ENCODE measurements at regions of chr11 and their contacts with region 1.

Region 1: GRCh38 chr11:111841370-111842053 is 29.9 kb downstream of the ALG9 start:
- DNase-seq: peak; percentile 91 to 94
- H3K4me3 ChIP-seq: no peak overlapping the region
- H3K4me3 Mint-ChIP-seq: no peak overlapping the region
- H3K27ac Mint-ChIP-seq: no peak overlapping the region
- H3K4me1 ChIP-seq: peaks cover 19% of the 10 kb centered on the region
- H3K4me1 Mint-ChIP-seq: peaks cover 20% of the 10 kb centered on the region
- H3K27me3 ChIP-seq: no peaks in the 10 kb centered on the region
- H3K27me3 Mint-ChIP-seq: no peaks in the 10 kb centered on the region
- CTCF ChIP-seq: peak; percentile 96 to 98

Region 2: DNA sequence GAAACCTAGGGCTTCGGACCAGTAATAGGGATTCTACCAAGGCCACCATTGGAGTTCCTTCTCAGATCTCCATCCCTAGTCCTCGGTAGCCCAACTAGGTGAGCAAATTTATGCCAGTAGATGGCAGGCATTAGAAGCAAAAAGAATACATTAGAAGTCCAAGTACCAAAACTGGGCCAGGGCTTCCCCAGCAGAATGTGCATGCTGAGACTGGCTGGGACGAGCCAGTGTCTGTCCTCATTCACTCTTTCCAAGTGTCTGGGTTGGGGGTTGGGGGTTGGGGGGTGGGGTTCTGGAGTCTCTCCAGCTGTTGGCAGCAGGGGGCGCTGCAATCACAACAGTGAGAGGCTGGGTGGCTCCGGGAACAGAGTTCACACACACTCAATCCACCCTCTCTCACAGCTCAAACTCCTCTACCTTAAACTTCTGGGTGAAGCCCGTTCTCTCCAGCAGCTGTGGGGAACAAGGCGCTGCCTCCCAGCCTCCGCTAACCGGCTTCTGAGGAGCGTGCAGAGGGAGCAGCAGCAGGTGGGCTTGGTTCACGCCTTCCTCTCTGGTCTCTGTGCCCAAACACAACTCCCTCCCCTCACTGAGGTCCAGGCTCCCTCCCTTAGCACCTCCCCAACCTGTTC is 386.8 kb before region 1 on chr11:
- CTCF ChIA-PET with region 1: interaction called, 3 read pairs
- POLR2A ChIA-PET with region 1: no interaction called
- intact Hi-C with region 1: loop called (anchors 1 kb)
- DNase-seq: peak; percentile 76 to 78
- H3K4me3 ChIP-seq: no peak overlapping the region
- H3K4me3 Mint-ChIP-seq: no peak overlapping the region
- H3K27ac Mint-ChIP-seq: no peak overlapping the region
- H3K4me1 ChIP-seq: peaks cover 12% of the 10 kb centered on the region
- H3K4me1 Mint-ChIP-seq: peaks cover 12% of the 10 kb centered on the region
- H3K27me3 ChIP-seq: no peaks in the 10 kb centered on the region
- H3K27me3 Mint-ChIP-seq: peaks cover 3% of the 10 kb centered on the region
- CTCF ChIP-seq: peak; percentile 64 to 83

Region 3: DNA sequence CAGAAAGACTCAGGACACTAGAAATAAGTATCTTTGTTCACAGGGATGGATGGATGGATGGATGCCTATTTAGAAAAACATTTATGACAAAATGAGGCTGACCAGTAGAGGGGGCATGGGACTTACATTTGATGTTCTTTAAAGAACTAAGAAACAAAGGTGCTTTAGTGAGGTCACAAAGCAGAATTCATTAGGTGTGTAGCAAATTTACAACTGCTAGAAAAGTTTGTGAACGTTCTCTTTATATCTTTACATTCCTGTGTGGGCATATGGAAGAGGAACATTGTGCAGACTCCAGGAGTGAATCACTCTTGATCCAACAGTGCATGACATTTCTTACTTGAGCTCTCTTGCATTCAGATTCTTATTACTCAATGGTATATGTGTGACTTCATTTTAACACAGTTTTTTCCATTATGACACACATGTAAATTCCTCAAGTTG is 255.1 kb before region 1 on chr11:
- CTCF ChIA-PET with region 1: interaction called, 6 read pairs
- POLR2A ChIA-PET with region 1: no interaction called
- intact Hi-C with region 1: loop called (anchors 1 kb)
- DNase-seq: peak in 1 of 2 experiments; percentile 71
- H3K4me3 ChIP-seq: no peak overlapping the region
- H3K4me3 Mint-ChIP-seq: no peak overlapping the region
- H3K27ac Mint-ChIP-seq: no peak overlapping the region
- H3K4me1 ChIP-seq: no peaks in the 10 kb centered on the region
- H3K4me1 Mint-ChIP-seq: no peaks in the 10 kb centered on the region
- H3K27me3 ChIP-seq: no peaks in the 10 kb centered on the region
- H3K27me3 Mint-ChIP-seq: no peaks in the 10 kb centered on the region
- CTCF ChIP-seq: peak; percentile 83 to 91

Region 4: DNA sequence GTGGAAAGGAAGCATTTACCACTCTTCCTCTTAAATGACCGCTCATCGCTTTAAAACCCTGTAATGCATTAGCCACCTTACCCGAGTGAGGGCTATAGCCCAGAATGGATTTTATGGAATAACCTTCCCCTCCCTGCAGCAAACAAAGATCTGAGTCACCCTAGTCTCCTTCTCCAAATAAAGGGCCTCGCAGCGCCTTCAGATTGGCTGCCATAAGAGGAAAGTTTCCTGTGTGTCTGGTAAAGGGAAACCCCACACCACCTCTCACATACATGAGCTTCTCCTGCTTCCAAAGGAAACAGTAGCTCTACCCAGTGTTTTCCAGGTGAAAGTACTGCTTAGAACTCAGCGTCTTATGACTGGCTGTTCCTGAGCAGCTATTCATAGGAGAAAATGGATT is 123.1 kb before region 1 on chr11:
- CTCF ChIA-PET with region 1: interaction called, 3 read pairs
- POLR2A ChIA-PET with region 1: no interaction called
- intact Hi-C with region 1: loop called (anchors 5 kb)
- DNase-seq: peak in 1 of 2 experiments; percentile 41
- H3K4me3 ChIP-seq: no peak overlapping the region
- H3K4me3 Mint-ChIP-seq: no peak overlapping the region
- H3K27ac Mint-ChIP-seq: peak overlapping the region; percentile 14
- H3K4me1 ChIP-seq: peaks cover 5% of the 10 kb centered on the region; the same call in 1 of the 2 replicates
- H3K4me1 Mint-ChIP-seq: peaks cover 15% of the 10 kb centered on the region
- H3K27me3 ChIP-seq: no peaks in the 10 kb centered on the region
- H3K27me3 Mint-ChIP-seq: no peaks in the 10 kb centered on the region
- CTCF ChIP-seq: no peak

Region 5: GRCh38 chr11:111737444-111738210 is 103.9 kb before region 1 on chr11:
- CTCF ChIA-PET with region 1: no interaction called
- POLR2A ChIA-PET with region 1: no interaction called
- intact Hi-C with region 1: loop called (anchors 1 kb)
- DNase-seq: no peak
- H3K4me3 ChIP-seq: no peak overlapping the region
- H3K4me3 Mint-ChIP-seq: no peak overlapping the region
- H3K27ac Mint-ChIP-seq: peak overlapping the region; percentile 29
- H3K4me1 ChIP-seq: peaks cover 13% of the 10 kb centered on the region
- H3K4me1 Mint-ChIP-seq: peaks cover 13% of the 10 kb centered on the region
- H3K27me3 ChIP-seq: no peaks in the 10 kb centered on the region
- H3K27me3 Mint-ChIP-seq: no peaks in the 10 kb centered on the region
- CTCF ChIP-seq: no peak

Region 6: DNA sequence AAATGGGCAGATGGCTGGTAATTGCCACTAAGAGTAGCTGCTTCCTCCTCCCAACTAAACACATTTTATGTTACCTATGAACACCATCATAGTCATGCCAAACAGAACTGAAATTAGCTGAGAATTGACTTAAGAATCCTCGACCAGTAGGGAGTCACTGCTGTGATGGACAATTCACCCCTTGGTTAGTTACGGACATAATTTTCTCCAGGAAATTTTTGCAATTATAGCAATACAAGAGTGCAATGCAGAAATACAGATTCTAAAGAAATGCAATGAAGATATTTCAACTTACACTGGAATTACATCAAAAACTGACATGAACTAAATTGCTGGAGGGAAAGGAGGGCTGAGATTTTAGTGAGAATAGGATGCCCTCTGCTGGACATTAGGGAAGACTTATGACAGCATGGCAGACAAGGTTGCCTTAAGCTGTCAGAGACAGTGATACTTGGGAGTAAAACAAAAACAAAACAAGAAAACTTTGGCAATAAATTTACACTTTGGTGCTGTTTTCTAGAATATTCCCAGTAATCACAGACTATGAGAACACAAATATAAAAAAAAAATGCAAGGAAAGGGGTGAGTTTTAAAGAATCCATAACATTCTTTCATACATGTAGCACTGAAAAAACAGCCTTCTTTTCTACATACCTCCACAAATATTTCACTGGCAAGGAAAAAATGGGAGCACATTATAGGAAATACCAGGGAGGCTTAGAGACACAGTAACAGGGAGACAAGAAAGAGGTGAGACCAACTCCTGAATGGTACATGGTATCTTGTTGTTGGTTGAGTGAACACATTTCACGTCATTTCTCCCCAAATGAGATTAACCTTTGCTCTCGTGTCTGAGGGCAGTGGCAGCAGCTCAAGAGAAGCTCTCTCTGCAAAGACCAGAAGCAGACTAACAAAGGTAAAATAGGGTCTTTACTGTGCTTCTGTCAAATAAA is 64.1 kb before region 1 on chr11:
- CTCF ChIA-PET with region 1: interaction called, 16 read pairs
- POLR2A ChIA-PET with region 1: no interaction called
- intact Hi-C with region 1: loop called (anchors 1 kb)
- DNase-seq: peak; percentile 54 to 71
- H3K4me3 ChIP-seq: no peak overlapping the region
- H3K4me3 Mint-ChIP-seq: peak overlapping the region; percentile 4
- H3K27ac Mint-ChIP-seq: peak overlapping the region; percentile 39
- H3K4me1 ChIP-seq: peaks cover 17% of the 10 kb centered on the region
- H3K4me1 Mint-ChIP-seq: peaks cover 17% of the 10 kb centered on the region
- H3K27me3 ChIP-seq: no peaks in the 10 kb centered on the region
- H3K27me3 Mint-ChIP-seq: no peaks in the 10 kb centered on the region
- CTCF ChIP-seq: peak; percentile 95 to 96

Region 7: DNA sequence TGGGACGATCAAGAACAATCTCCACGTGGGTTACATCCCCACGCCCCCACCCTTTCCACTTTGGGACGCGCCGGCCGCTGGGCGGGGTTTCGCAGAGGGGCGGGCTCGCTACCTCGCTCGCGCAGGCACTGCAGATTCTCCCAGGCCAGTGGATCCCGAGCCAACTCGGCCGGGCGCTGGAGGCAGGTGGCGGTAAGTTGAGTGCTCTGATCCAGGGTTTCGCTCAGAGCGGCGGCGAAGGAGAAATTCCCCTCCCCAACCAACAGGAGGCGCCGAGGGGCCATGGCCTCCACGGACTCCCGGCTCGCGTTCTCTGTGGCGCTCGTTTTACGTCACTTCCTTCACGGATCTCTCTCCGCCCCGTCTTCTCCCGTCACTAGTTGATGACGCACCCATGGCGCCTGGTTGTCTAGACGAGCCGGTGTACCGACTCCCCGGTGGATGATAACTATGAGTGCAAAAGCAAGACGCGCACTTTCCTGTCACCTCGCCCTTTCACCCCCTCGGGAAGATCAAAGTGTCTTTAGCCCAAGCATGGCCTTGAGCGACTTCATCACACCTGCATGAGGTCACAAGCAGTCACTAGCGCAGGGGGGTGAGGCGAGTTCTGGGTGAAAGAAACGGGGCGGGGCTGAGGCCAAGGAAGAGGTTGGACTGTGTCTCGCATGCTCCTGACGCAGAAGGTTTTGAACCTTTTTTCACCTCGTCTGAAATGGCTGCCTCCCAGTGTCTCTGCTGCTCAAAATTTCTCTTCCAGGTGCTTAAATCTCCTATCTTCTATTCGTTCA is 37.5 kb after region 1 on chr11 and contains the starts of genes CFAP68 and FDXACB1:
- CTCF ChIA-PET with region 1: no interaction called
- POLR2A ChIA-PET with region 1: no interaction called
- intact Hi-C with region 1: loop called (anchors 1 kb)
- DNase-seq: peak; percentile 100
- H3K4me3 ChIP-seq: peak within 1 kb of the TSS; percentile 51
- H3K4me3 Mint-ChIP-seq: peak within 1 kb of the TSS; percentile 86
- H3K27ac Mint-ChIP-seq: peak within 1 kb of the TSS; percentile 97
- H3K4me1 ChIP-seq: peaks cover 6% of the 10 kb centered on the region; the same call in 1 of the 2 replicates
- H3K4me1 Mint-ChIP-seq: peaks cover 8% of the 10 kb centered on the region
- H3K27me3 ChIP-seq: no peaks in the 10 kb centered on the region
- H3K27me3 Mint-ChIP-seq: no peaks in the 10 kb centered on the region
- CTCF ChIP-seq: peak; percentile 99
- total RNA-seq, gene CFAP68: 69.8 and 71.4 TPM in 2 replicates
- total RNA-seq, gene FDXACB1: 4.3 and 4.7 TPM in 2 replicates

Measured in Caco-2 (cell line).